ENCODE measurements at regions of chr5 and their contacts with region 1.

Region 1: GRCh38 chr5:137660349-137660817 is 75.5 kb downstream of the KLHL3 start:
- DNase-seq: peak; percentile 24
- H3K4me3 ChIP-seq: no peak overlapping the region
- CTCF ChIP-seq: peak; percentile 77

Region 2: GRCh38 chr5:137635521-137635921 is 24.9 kb before region 1 on chr5:
- CTCF ChIA-PET with region 1: interaction called, 61 read pairs
- POLR2A ChIA-PET with region 1: no interaction called
- DNase-seq: no peak
- H3K4me3 ChIP-seq: no peak overlapping the region
- CTCF ChIP-seq: no peak

Region 3: DNA sequence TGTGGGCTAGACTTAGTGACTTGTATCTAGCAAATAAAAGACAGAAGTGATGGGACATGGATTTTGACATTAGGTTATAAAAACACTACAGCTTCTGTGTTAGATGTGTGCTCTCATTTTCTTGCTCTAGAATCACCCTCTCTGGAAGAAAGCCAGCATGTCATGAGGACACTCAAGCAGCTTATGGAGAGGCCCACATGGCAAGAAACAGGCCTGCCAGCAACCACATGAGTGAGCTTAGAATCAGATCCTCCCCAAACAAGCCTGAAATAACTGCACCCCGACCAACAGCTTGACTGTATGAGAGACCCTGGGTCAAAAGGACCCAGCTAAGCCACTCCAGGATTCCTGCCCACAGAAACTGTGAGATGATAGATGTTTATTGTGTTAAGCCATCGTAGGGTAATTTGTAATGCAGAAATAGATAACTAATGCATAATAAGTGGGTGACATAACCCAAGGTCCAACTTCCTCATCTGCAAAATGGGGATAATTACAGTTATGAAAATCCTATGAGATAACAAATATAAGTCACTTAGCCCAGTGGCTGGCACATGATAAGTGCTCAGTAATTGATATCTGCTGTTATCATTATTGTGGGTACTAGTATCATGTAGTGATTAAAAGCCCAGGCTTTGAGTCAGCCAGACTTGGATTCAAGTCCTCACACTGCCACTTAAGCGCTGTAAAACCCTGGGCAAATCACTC is 11.0 kb before region 1 on chr5:
- CTCF ChIA-PET with region 1: interaction called, 37 read pairs
- POLR2A ChIA-PET with region 1: no interaction called
- DNase-seq: peak; percentile 33
- H3K4me3 ChIP-seq: no peak overlapping the region
- CTCF ChIP-seq: no peak

Region 4: GRCh38 chr5:137695651-137696428 is 35.5 kb after region 1 on chr5:
- CTCF ChIA-PET with region 1: interaction called, 16 read pairs
- POLR2A ChIA-PET with region 1: no interaction called
- DNase-seq: no peak
- H3K4me3 ChIP-seq: no peak overlapping the region
- CTCF ChIP-seq: no peak

Region 5: GRCh38 chr5:137743031-137743640 is 82.8 kb after region 1 on chr5:
- CTCF ChIA-PET with region 1: interaction called, 738 read pairs
- POLR2A ChIA-PET with region 1: no interaction called
- DNase-seq: no peak
- H3K4me3 ChIP-seq: no peak overlapping the region
- CTCF ChIP-seq: peak; percentile 56

Measured in AG04449 (cell line).